Naive thymus-derived CD4-positive, alpha-beta T cell (primary cell): ENCODE measurements at regions of chr2 and their contacts with region 1.

Region 1: DNA sequence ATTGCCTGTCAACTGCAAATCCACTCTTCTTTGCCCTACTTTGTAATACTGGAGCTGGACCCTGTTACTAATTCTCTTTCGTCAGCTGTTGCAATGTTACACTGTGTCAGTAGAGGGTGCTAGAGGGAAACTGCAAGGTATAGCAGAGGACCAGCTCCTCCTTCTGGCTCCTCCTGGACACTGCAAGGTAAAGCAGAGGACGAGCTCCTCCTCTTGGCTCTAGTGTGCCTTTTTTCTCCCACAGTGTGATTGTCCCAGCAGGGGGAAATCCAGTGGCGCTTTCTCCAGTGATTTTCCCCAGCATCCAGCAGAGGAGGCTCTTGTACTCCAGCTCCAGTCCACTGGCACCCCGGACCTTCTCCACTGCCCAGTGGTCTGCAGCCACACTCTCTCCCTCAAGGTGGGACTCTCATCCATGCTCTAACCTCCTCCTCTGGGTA is 95.6 kb downstream of the CAPN13 start:
- DNase-seq: peak; percentile 50 to 89 (median 86)
- ATAC-seq: peak; percentile 96
- H3K4me3 ChIP-seq: no peak overlapping the region
- H3K4me3 Mint-ChIP-seq: no peak overlapping the region
- H3K27ac ChIP-seq: no peak overlapping the region
- H3K27ac Mint-ChIP-seq: peak overlapping the region in 1 of 9 donors; percentile 8
- H3K4me1 ChIP-seq: no peaks in the 10 kb centered on the region
- H3K4me1 Mint-ChIP-seq: peaks cover 0 to 8% (median 5%) of the 10 kb centered on the region in 7 donors
- H3K27me3 ChIP-seq: no peaks in the 10 kb centered on the region
- H3K27me3 Mint-ChIP-seq: peaks cover 0 to 4% (median 0%) of the 10 kb centered on the region in 5 donors

Region 2: DNA sequence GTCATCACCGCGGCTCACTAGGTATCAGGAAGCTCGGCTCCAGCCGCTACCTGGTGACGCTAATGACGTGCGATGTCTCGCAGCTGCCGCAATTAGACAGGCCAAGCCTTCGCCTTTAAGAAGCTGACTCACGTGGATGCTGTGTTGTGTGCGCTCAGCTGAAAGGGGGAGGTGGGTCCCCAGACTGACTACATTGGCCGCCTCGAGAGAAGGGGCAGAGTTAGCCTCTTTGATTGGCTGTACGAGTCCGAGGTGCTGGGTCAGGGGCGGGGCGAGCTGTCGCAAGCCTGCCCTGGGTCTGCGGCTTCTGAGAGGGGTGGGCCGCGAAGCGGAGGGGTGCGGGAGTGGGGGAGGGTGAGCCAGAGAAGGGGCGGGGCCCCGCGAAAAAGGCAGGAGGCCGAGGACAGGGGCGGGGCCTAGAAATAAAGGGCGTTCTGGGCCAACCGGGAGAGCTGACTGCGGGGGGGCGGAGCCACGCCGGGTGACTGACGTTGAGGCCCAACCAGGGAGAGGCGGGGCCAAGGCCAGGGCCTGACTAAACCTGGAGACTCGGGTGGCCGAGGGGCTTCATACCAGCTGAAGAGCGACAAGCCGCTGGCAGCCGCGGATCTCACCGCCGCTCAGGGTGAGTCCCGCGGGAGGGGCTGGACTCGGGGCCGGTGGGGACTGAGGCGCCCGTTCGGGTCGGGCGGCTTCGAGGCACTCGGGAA is 565.1 kb before region 1 on chr2 and contains the start of gene YPEL5:
- CTCF ChIA-PET with region 1: interaction called, 14 read pairs
- POLR2A ChIA-PET with region 1: interaction called, 4 read pairs
- intact Hi-C with region 1: no loop called
- DNase-seq: peak; percentile 98 to 100 (median 100)
- ATAC-seq: peak; percentile 88
- H3K4me3 ChIP-seq: peak within 1 kb of the TSS; percentile 74
- H3K4me3 Mint-ChIP-seq: peak within 1 kb of the TSS; percentile 83 to 93 (median 88)
- H3K27ac ChIP-seq: peak within 1 kb of the TSS; percentile 100
- H3K27ac Mint-ChIP-seq: peak within 1 kb of the TSS; percentile 99 to 100 (median 99)
- H3K4me1 ChIP-seq: peaks cover 31 to 40% of the 10 kb centered on the region in 2 donors
- H3K4me1 Mint-ChIP-seq: peaks cover 38 to 75% (median 56%) of the 10 kb centered on the region in 7 donors
- H3K27me3 ChIP-seq: no peaks in the 10 kb centered on the region
- H3K27me3 Mint-ChIP-seq: no peaks in the 10 kb centered on the region
- total RNA-seq, gene YPEL5: 30.9 to 1,022 (median 98.3) TPM

Region 3: DNA sequence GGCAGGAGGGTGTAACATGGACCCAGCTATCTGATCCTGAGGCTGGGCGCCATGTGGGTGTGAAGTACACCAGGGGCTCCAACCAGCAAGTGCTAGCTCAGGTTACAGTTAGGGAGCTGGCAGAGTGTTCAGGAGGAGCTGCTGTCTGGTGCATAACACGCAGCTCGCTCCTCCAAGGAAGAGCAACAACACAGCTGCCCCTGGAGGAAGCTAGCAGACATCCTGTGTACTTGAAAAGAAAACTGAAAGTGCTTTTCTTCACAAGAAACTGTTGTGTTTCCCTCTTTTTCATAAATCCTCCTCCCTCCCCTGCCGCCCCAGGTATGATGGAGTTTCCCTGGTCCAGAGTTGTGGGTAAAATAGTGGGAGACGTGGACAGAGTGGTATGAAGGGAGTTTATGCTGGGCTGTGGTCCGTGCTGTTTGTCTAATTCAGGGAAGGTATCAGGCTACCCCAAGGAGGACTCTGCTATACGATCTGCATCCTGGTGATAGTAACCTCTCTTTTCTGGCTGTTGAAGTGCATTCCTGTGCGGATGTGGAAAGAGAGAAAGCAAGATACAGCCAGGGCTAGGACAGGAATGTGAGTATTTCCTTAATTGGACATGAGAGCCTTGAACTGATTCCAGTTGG is 486.4 kb before region 1 on chr2:
- CTCF ChIA-PET with region 1: interaction called, 5 read pairs
- POLR2A ChIA-PET with region 1: no interaction called
- intact Hi-C with region 1: loop called (anchors 5 to 10 kb)
- DNase-seq: peak in 8 of 9 donors; percentile 46 to 77 (median 72)
- ATAC-seq: peak; percentile 81
- H3K4me3 ChIP-seq: peak overlapping the region; percentile 67
- H3K4me3 Mint-ChIP-seq: peak overlapping the region; percentile 87 to 99 (median 94)
- H3K27ac ChIP-seq: peak overlapping the region; percentile 95
- H3K27ac Mint-ChIP-seq: peak overlapping the region; percentile 95 to 100 (median 100)
- H3K4me1 ChIP-seq: peaks cover 63 to 67% of the 10 kb centered on the region in 2 donors
- H3K4me1 Mint-ChIP-seq: peaks cover 48 to 86% (median 76%) of the 10 kb centered on the region in 7 donors
- H3K27me3 ChIP-seq: no peaks in the 10 kb centered on the region
- H3K27me3 Mint-ChIP-seq: peaks cover 0 to 3% (median 0%) of the 10 kb centered on the region in 5 donors

Region 4: DNA sequence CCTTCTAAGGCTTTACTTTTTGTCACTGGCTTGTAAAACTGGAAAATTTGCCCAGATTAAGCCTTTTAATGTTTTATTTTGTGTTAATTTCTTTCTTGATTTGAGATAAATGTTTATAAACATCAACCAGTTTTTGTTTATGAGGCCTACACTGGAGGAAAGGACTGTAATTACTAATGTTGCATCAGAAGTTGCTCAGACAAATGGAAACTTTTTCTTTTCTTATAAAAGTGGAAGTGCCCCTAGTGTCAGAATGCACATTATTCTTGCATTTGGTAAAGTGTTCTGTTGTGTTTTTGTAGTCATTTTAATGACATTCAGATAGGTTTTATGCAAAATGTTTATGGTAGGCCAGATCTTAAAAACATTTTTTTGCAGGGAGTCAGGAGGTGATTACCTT is 239.3 kb before region 1 on chr2:
- CTCF ChIA-PET with region 1: interaction called, 11 read pairs
- POLR2A ChIA-PET with region 1: no interaction called
- intact Hi-C with region 1: loop called in 1 of 2 experiments (anchors 1 kb)
- DNase-seq: peak in 1 of 9 donors; percentile 14
- ATAC-seq: no peak
- H3K4me3 ChIP-seq: no peak overlapping the region
- H3K4me3 Mint-ChIP-seq: no peak overlapping the region
- H3K27ac ChIP-seq: no peak overlapping the region
- H3K27ac Mint-ChIP-seq: peak overlapping the region in 2 of 9 donors; percentile 0 to 25
- H3K4me1 ChIP-seq: peaks cover 0 to 20% of the 10 kb centered on the region in 2 donors
- H3K4me1 Mint-ChIP-seq: peaks cover 14 to 78% (median 40%) of the 10 kb centered on the region in 7 donors
- H3K27me3 ChIP-seq: no peaks in the 10 kb centered on the region
- H3K27me3 Mint-ChIP-seq: no peaks in the 10 kb centered on the region

Region 5: DNA sequence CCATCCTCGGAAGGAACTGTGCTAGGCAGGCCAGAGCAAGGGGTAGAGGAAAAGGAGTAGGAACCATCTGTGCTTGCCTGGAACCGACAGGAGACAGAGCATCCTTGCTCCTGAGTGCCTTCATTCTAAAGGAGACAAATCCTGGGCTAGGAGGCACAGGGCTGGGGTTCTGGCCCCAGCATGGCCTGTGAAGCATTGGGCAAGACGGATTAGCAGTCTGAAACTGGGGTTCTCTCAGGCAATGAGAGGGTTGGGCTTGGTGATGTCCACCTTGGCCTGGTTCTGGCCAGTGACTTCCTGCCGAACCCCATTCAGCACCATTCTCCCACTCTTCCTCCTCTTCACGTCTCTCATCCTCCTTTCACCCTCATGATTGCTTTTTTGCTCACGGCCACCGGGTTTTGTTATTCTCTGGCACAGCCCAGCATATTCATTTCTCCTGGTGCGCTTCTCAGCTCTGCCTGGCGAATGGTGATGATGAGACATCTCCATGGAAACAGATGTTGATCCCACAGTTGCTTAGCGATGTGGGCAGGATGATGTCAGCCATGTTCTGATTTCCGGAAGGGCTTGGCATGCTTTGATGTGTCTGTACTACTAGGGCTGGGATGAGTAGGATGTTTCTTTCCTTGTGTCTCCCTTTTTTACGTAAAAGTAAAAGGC is 32.1 kb before region 1 on chr2:
- CTCF ChIA-PET with region 1: no interaction called
- POLR2A ChIA-PET with region 1: no interaction called
- intact Hi-C with region 1: no loop called
- DNase-seq: peak in 1 of 9 donors; percentile 14
- ATAC-seq: no peak
- H3K4me3 ChIP-seq: no peak overlapping the region
- H3K4me3 Mint-ChIP-seq: no peak overlapping the region
- H3K27ac ChIP-seq: no peak overlapping the region
- H3K27ac Mint-ChIP-seq: no peak overlapping the region
- H3K4me1 ChIP-seq: no peaks in the 10 kb centered on the region
- H3K4me1 Mint-ChIP-seq: peaks cover 0 to 4% (median 0%) of the 10 kb centered on the region in 7 donors
- H3K27me3 ChIP-seq: no peaks in the 10 kb centered on the region
- H3K27me3 Mint-ChIP-seq: peaks cover 0 to 5% (median 0%) of the 10 kb centered on the region in 5 donors

Region 6: GRCh38 chr2:31170071-31170698 is 458.5 kb after region 1 on chr2:
- CTCF ChIA-PET with region 1: interaction called, 20 read pairs
- POLR2A ChIA-PET with region 1: no interaction called
- intact Hi-C with region 1: loop called (anchors 1 kb)
- DNase-seq: peak in 8 of 9 donors; percentile 3 to 49 (median 28)
- ATAC-seq: peak; percentile 78
- H3K4me3 ChIP-seq: no peak overlapping the region
- H3K4me3 Mint-ChIP-seq: no peak overlapping the region
- H3K27ac ChIP-seq: no peak overlapping the region
- H3K27ac Mint-ChIP-seq: peak overlapping the region in 1 of 9 donors; percentile 32
- H3K4me1 ChIP-seq: no peaks in the 10 kb centered on the region
- H3K4me1 Mint-ChIP-seq: peaks cover 0 to under 1% (median 0%) of the 10 kb centered on the region in 7 donors
- H3K27me3 ChIP-seq: no peaks in the 10 kb centered on the region
- H3K27me3 Mint-ChIP-seq: peaks cover 0 to 6% (median under 1%) of the 10 kb centered on the region in 5 donors

Region 7: GRCh38 chr2:31523871-31524492 is 812.3 kb after region 1 on chr2:
- CTCF ChIA-PET with region 1: interaction called, 24 read pairs
- POLR2A ChIA-PET with region 1: no interaction called
- intact Hi-C with region 1: loop called in 1 of 2 experiments (anchors 1 kb)
- DNase-seq: peak in 7 of 9 donors; percentile 12 to 45 (median 34)
- ATAC-seq: peak; percentile 53
- H3K4me3 ChIP-seq: no peak overlapping the region
- H3K4me3 Mint-ChIP-seq: no peak overlapping the region
- H3K27ac ChIP-seq: no peak overlapping the region
- H3K27ac Mint-ChIP-seq: no peak overlapping the region
- H3K4me1 ChIP-seq: no peaks in the 10 kb centered on the region
- H3K4me1 Mint-ChIP-seq: no peaks in the 10 kb centered on the region
- H3K27me3 ChIP-seq: no peaks in the 10 kb centered on the region
- H3K27me3 Mint-ChIP-seq: peaks cover 2 to 25% (median 12%) of the 10 kb centered on the region in 5 donors